ENCODE measurements at regions of chr5 and their contacts with region 1.

Region 1: DNA sequence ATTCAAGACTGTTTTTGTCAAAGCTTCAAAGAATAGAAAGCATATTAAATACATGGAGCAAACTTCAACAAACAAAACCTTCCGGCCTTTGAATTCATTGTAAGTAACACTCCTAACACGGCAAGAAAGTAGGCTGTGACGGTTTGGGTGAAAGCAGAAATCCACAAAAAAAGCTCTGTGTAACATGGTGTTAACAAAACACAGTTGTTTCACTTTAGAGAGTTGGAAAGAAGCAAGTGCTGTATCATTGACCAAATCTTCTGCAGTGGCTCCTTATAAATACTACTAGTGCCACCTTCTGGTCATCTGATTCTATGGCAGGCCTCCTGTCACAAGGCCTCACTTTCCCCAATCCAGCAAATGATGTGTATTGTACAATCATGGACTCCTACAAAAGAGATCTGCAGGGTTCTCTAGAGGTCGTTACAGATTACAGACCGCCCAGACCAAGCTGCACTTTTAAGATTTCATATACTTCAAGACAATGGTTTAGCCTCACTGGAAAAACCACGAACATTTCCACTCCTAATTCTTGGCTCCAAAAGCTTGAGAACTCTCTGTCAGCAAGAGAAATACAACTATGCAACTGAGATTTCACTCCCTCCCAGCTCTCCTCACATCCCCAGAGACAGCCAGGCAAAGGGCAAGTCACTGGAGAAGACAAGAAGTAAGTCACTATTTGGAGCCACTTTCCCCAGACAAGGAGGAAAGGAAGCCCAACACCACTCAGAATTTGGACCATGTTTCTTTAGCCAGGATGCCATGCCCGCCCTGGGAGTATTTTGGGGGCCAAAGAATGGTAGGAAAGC is 196.2 kb downstream of the DTWD2 start:
- DNase-seq: peak; percentile 39
- H3K4me3 Mint-ChIP-seq: no peak overlapping the region
- H3K27ac Mint-ChIP-seq: no peak overlapping the region
- H3K4me1 Mint-ChIP-seq: no peaks in the 10 kb centered on the region
- H3K27me3 Mint-ChIP-seq: no peaks in the 10 kb centered on the region

Region 2: GRCh38 chr5:117454716-117455596 is 1337.2 kb before region 1 on chr5:
- CTCF ChIA-PET with region 1: interaction called, 11 read pairs
- intact Hi-C with region 1: loop called (anchors 1 kb)
- DNase-seq: peak; percentile 66
- H3K4me3 Mint-ChIP-seq: peak overlapping the region; percentile 49
- H3K27ac Mint-ChIP-seq: no peak overlapping the region
- H3K4me1 Mint-ChIP-seq: no peaks in the 10 kb centered on the region
- H3K27me3 Mint-ChIP-seq: peaks cover 2% of the 10 kb centered on the region

Region 3: DNA sequence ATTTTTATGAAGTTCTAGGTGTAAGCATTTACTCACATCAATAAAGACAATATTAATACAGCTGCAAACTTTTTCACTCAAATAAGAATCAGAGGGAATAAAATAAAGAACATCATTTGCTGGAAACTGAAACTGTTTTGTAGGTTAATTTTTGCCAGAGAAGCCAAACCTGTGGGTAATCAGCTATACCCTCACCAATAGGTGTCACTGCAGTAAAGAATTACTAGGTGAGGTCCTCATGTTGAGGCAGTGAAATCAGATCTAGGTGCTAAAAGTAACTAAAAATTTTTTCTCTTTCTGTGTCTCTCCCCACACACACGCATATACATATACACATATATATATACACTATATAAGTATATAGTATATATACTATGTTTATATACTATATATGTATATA is 1201.2 kb before region 1 on chr5:
- CTCF ChIA-PET with region 1: no interaction called
- intact Hi-C with region 1: loop called (anchors 2 kb)
- DNase-seq: no peak
- H3K4me3 Mint-ChIP-seq: no peak overlapping the region
- H3K27ac Mint-ChIP-seq: no peak overlapping the region
- H3K4me1 Mint-ChIP-seq: no peaks in the 10 kb centered on the region
- H3K27me3 Mint-ChIP-seq: no peaks in the 10 kb centered on the region

Region 4: GRCh38 chr5:118224546-118224945 is 567.6 kb before region 1 on chr5:
- CTCF ChIA-PET with region 1: no interaction called
- intact Hi-C with region 1: no loop called
- DNase-seq: no peak
- H3K4me3 Mint-ChIP-seq: no peak overlapping the region
- H3K27ac Mint-ChIP-seq: no peak overlapping the region
- H3K4me1 Mint-ChIP-seq: no peaks in the 10 kb centered on the region
- H3K27me3 Mint-ChIP-seq: no peaks in the 10 kb centered on the region

Region 5: GRCh38 chr5:118832974-118833373 is 40.8 kb after region 1 on chr5:
- CTCF ChIA-PET with region 1: no interaction called
- intact Hi-C with region 1: no loop called
- DNase-seq: no peak
- H3K4me3 Mint-ChIP-seq: no peak overlapping the region
- H3K27ac Mint-ChIP-seq: no peak overlapping the region
- H3K4me1 Mint-ChIP-seq: no peaks in the 10 kb centered on the region
- H3K27me3 Mint-ChIP-seq: no peaks in the 10 kb centered on the region

Region 6: GRCh38 chr5:118956727-118957126 is 164.6 kb after region 1 on chr5:
- CTCF ChIA-PET with region 1: no interaction called
- intact Hi-C with region 1: loop called (anchors 10 kb)
- DNase-seq: no peak
- H3K4me3 Mint-ChIP-seq: no peak overlapping the region
- H3K27ac Mint-ChIP-seq: no peak overlapping the region
- H3K4me1 Mint-ChIP-seq: no peaks in the 10 kb centered on the region
- H3K27me3 Mint-ChIP-seq: no peaks in the 10 kb centered on the region

Region 7: GRCh38 chr5:119743927-119744326 is 951.8 kb after region 1 on chr5:
- CTCF ChIA-PET with region 1: no interaction called
- intact Hi-C with region 1: loop called (anchors 10 kb)
- DNase-seq: peak; percentile 22
- H3K4me3 Mint-ChIP-seq: no peak overlapping the region
- H3K27ac Mint-ChIP-seq: no peak overlapping the region
- H3K4me1 Mint-ChIP-seq: no peaks in the 10 kb centered on the region
- H3K27me3 Mint-ChIP-seq: peaks cover 3% of the 10 kb centered on the region